CD8-positive, alpha-beta T cell (primary cell): ENCODE measurements at regions of chr7 and their contacts with region 1.

Region 1: DNA sequence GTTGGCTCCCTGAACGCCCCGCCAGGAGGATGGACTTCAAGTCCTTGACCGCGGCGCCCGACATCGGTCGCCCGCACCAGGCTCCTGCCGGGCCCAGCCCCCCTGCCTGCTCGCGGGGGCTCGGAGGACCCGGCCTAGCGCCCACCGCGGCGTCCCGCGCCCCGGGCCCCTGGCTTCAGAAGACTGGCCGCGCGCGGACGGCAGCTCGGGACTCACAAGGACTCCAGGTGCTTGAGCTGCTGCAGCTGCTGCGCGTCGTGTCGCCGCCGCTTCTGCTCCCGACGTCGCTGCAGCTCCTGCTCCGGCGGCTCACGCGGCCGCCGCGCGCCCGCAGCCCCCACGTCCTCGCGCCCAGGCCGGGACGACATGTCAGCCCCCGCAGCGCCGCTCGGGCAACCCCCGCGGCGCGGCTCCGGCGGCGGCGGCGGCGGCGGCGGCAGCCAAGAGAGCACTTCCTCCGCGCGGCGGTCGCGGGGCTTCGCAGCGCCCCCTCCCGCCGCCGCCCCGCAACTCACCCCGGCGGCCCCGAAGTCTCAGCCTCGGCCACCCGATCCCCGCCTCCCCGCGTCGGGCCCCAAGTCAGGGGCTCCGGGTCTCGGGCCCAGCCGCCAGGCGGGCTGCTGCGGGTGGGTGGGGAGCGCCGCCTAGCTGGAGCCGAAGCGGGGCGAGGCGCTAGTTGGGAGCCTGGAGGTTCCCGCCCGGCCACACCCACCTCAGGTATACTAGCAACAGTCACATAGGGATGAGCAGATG is at the start of gene RP9:
- DNase-seq: peak; percentile 56 to 89 (median 72)
- ATAC-seq: peak; percentile 88
- H3K4me3 ChIP-seq: peak within 1 kb of the TSS; percentile 58 to 74
- H3K4me3 Mint-ChIP-seq: peak within 1 kb of the TSS; percentile 87
- H3K27ac ChIP-seq: peak within 1 kb of the TSS; percentile 22 to 55
- H3K27ac Mint-ChIP-seq: peak within 1 kb of the TSS; percentile 86
- H3K4me1 ChIP-seq: peaks cover 24% of the 10 kb centered on the region
- H3K4me1 Mint-ChIP-seq: peaks cover 39% of the 10 kb centered on the region
- H3K27me3 ChIP-seq: no peaks in the 10 kb centered on the region
- H3K27me3 Mint-ChIP-seq: peaks cover 10% of the 10 kb centered on the region
- CTCF ChIP-seq: peak; percentile 36
- total RNA-seq, gene RP9: 20.2 to 21.8 TPM

Region 2: GRCh38 chr7:32694182-32694581 is 415.0 kb before region 1 on chr7:
- CTCF ChIA-PET with region 1: interaction called, 6 read pairs
- POLR2A ChIA-PET with region 1: no interaction called
- intact Hi-C with region 1: loop called (anchors 5 kb)
- DNase-seq: no peak
- ATAC-seq: no peak
- H3K4me3 ChIP-seq: no peak overlapping the region
- H3K4me3 Mint-ChIP-seq: no peak overlapping the region
- H3K27ac ChIP-seq: no peak overlapping the region
- H3K27ac Mint-ChIP-seq: no peak overlapping the region
- H3K4me1 ChIP-seq: no peaks in the 10 kb centered on the region
- H3K4me1 Mint-ChIP-seq: peaks cover 6% of the 10 kb centered on the region
- H3K27me3 ChIP-seq: no peaks in the 10 kb centered on the region
- H3K27me3 Mint-ChIP-seq: no peaks in the 10 kb centered on the region
- CTCF ChIP-seq: no peak

Region 3: DNA sequence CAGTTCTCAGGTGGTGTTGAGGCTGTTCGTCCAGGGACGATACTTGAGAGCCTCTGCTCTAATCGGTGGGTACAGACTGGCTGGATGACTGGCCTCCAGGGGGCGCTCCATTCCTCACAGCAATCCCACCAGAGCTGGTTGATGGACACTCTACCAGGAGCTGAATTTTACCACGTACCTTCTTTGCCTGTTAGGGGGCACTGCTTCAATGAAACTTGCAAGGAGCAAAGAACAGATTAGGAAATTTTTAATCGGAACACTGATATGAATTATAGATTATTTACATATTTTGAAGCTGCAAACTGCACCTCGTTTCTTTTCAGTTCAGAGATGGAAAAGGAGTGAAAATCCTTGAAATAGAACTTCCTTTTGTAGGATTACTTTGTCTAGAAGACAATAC is 262.5 kb before region 1 on chr7:
- CTCF ChIA-PET with region 1: interaction called, 40 read pairs
- POLR2A ChIA-PET with region 1: no interaction called
- intact Hi-C with region 1: loop called (anchors 1 to 2 kb)
- DNase-seq: peak; percentile 80 to 96 (median 91)
- ATAC-seq: peak; percentile 100
- H3K4me3 ChIP-seq: no peak overlapping the region
- H3K4me3 Mint-ChIP-seq: no peak overlapping the region
- H3K27ac ChIP-seq: no peak overlapping the region
- H3K27ac Mint-ChIP-seq: no peak overlapping the region
- H3K4me1 ChIP-seq: peaks cover 4% of the 10 kb centered on the region
- H3K4me1 Mint-ChIP-seq: peaks cover 8% of the 10 kb centered on the region
- H3K27me3 ChIP-seq: no peaks in the 10 kb centered on the region
- H3K27me3 Mint-ChIP-seq: peaks cover 26% of the 10 kb centered on the region
- CTCF ChIP-seq: peak; percentile 80

Region 4: DNA sequence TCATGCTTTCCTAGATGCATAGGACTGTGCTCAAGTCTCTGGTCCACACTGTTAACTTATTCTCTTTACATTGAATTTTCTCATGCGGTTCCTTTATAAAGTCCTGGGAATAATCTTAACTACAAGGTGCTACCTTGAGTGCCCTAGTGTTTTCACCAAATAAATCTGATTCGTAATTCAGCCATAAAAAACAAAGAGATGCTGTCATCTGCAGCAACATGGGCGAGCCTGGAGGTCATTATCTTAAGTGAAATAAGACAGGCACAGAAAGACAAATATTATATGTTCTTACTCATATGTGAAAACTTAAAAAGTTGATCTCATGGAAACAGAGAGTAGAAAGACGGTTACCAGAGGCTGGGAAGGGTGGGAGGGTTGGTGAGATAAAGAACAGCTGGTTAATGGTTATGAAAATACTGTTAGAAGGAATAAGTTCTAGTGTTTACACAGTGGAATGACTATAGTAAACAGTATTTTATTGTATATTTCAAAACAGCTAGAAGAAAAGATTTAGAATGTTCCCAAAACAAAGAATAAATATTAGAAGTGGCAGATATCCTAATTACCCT is 84.9 kb before region 1 on chr7:
- CTCF ChIA-PET with region 1: interaction called, 10 read pairs
- POLR2A ChIA-PET with region 1: interaction called, 3 read pairs
- intact Hi-C with region 1: no loop called
- DNase-seq: no peak
- ATAC-seq: no peak
- H3K4me3 ChIP-seq: no peak overlapping the region
- H3K4me3 Mint-ChIP-seq: no peak overlapping the region
- H3K27ac ChIP-seq: no peak overlapping the region
- H3K27ac Mint-ChIP-seq: no peak overlapping the region
- H3K4me1 ChIP-seq: no peaks in the 10 kb centered on the region
- H3K4me1 Mint-ChIP-seq: no peaks in the 10 kb centered on the region
- H3K27me3 ChIP-seq: no peaks in the 10 kb centered on the region
- H3K27me3 Mint-ChIP-seq: no peaks in the 10 kb centered on the region
- CTCF ChIP-seq: no peak

Region 5: DNA sequence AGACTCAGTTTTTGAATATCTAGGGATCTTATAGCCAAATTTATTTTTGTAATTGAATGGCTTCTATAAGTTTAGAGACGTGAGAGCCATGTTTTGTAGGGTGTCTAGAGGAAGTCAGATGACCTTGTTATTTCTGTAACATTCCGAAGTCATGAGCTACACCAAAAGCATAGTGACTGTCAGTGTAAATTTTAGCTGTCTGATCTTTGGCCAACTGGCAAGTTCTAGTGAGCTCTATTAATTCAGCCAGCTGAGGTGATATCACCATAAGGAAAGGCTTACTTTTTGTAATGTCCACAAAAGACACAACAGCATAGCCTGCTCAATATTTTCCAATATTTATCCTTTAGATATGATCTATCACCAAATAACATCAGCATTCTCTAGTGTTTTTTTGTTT is 36.7 kb before region 1 on chr7:
- CTCF ChIA-PET with region 1: interaction called, 15 read pairs
- POLR2A ChIA-PET with region 1: interaction called, 3 read pairs
- intact Hi-C with region 1: no loop called
- DNase-seq: no peak
- ATAC-seq: no peak
- H3K4me3 ChIP-seq: no peak overlapping the region
- H3K4me3 Mint-ChIP-seq: no peak overlapping the region
- H3K27ac ChIP-seq: no peak overlapping the region
- H3K27ac Mint-ChIP-seq: no peak overlapping the region
- H3K4me1 ChIP-seq: peaks cover 10% of the 10 kb centered on the region
- H3K4me1 Mint-ChIP-seq: peaks cover 14% of the 10 kb centered on the region
- H3K27me3 ChIP-seq: no peaks in the 10 kb centered on the region
- H3K27me3 Mint-ChIP-seq: peaks cover 20% of the 10 kb centered on the region
- CTCF ChIP-seq: no peak